ENCODE measurements at regions of chr20 and their contacts with region 1.

Region 1: DNA sequence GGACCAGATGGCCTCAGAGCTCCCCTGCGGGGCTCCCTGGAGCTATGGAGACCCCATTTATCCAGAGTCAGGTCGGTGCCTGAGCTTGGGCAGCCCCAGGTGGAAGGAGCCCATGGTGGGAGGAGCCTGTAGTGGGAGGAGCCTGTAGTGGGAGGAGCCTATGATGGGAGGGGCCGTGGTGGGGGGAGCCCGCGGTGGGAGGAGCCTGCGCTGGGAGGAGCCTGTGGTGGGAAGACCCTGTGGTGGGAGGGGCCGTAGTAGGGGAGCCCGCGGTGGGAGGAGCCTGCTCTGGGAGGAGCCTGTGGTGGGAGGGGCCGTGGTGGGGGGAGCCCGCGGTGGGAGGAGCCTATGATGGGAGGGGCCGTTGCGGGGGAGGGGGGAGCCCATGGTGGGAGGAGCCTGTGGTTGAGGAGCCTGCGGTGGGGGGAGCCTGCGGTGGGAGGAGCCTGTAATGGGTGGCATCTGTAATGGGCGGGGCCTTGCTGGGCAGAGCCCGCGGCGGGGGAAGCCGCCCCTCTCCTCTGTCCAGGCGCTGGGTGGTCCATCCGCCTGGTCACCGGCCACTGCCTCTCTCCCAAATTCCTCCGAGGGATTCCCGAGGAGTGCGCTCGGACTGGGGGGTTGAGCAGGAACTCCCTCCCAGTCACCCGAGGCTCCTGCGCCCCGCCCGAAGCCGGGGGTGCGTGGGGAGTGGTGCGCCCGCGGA is 579 bp upstream of the FNDC11 start:
- DNase-seq: peak; percentile 96
- ATAC-seq: peak; percentile 75
- H3K4me3 ChIP-seq: peak overlapping the region; percentile 7 to 89 (median 75)
- H3K4me3 Mint-ChIP-seq: peak overlapping the region; percentile 86
- H3K27ac ChIP-seq: peak overlapping the region; percentile 79 to 88
- H3K27ac Mint-ChIP-seq: peak overlapping the region; percentile 89
- H3K4me1 ChIP-seq: peaks cover 36 to 50% of the 10 kb centered on the region in 2 donors
- H3K4me1 Mint-ChIP-seq: peaks cover 50% of the 10 kb centered on the region
- H3K27me3 ChIP-seq: peaks cover 0 to 5% (median under 1%) of the 10 kb centered on the region in 4 experiments
- H3K27me3 Mint-ChIP-seq: no peaks in the 10 kb centered on the region
- CTCF ChIP-seq: no peak

Region 2: DNA sequence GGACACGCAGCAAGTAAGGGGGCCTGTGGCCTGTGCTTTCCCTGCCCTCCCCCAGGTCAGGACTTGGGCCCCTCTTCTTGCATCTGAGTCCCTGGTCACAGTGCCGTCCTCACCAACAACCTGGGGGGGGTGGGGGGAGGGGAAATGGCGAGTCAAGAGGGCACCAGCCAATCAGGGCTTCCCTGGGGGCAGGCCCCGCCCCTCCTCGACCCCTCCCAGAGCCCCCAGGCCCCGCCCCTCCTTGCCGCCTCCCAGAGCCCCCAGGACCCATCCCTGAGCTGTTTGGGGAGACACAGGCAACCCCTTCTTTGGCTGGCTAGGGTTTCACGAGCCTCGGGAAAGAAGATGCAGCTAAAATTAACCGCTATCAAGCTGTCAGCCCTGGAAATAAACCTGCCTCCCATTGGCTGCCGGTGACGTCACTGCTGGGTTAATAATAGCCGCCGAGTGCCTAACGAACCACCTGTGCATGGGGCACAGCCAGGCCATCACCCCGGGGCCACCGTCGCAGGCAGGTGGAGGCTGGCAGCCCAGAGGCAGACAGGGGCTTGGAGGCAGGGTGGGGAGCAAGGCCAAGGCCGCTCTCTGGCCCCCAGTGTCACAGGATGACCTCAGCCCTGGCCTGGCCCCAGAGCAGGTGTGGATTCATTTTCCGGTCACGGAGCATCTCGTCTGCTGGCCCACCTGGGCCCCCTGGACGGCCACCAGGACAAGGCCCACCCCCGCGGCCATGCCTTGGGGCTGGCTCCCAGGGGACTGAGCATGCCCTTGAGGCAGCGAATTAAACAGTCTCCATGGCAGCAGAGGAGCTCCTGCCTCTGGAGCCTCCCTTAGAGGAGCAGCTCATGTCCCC is 51.3 kb before region 1 on chr20:
- CTCF ChIA-PET with region 1: no interaction called
- POLR2A ChIA-PET with region 1: no interaction called
- intact Hi-C with region 1: no loop called
- DNase-seq: no peak
- ATAC-seq: no peak
- H3K4me3 ChIP-seq: no peak overlapping the region
- H3K4me3 Mint-ChIP-seq: no peak overlapping the region
- H3K27ac ChIP-seq: no peak overlapping the region
- H3K27ac Mint-ChIP-seq: no peak overlapping the region
- H3K4me1 ChIP-seq: peaks cover 14 to 16% of the 10 kb centered on the region in 2 donors
- H3K4me1 Mint-ChIP-seq: peaks cover 2% of the 10 kb centered on the region
- H3K27me3 ChIP-seq: peaks cover 0 to 33% (median 11%) of the 10 kb centered on the region in 4 experiments
- H3K27me3 Mint-ChIP-seq: peaks cover 20% of the 10 kb centered on the region
- CTCF ChIP-seq: no peak

Region 3: GRCh38 chr20:63542696-63543517 is 10.5 kb before region 1 on chr20:
- CTCF ChIA-PET with region 1: interaction called, 16 read pairs
- POLR2A ChIA-PET with region 1: interaction called, 11 read pairs
- intact Hi-C with region 1: loop called (anchors 1 kb)
- DNase-seq: peak; percentile 80
- ATAC-seq: peak; percentile 40
- H3K4me3 ChIP-seq: peak overlapping the region in 2 of 5 experiments; percentile 13 to 39
- H3K4me3 Mint-ChIP-seq: peak overlapping the region; percentile 74
- H3K27ac ChIP-seq: peak overlapping the region; percentile 67 to 78
- H3K27ac Mint-ChIP-seq: peak overlapping the region; percentile 89
- H3K4me1 ChIP-seq: peaks cover 44 to 75% of the 10 kb centered on the region in 2 donors
- H3K4me1 Mint-ChIP-seq: peaks cover 58% of the 10 kb centered on the region
- H3K27me3 ChIP-seq: peaks cover 0 to 2% (median 0%) of the 10 kb centered on the region in 4 experiments
- H3K27me3 Mint-ChIP-seq: no peaks in the 10 kb centered on the region
- CTCF ChIP-seq: no peak

Region 4: DNA sequence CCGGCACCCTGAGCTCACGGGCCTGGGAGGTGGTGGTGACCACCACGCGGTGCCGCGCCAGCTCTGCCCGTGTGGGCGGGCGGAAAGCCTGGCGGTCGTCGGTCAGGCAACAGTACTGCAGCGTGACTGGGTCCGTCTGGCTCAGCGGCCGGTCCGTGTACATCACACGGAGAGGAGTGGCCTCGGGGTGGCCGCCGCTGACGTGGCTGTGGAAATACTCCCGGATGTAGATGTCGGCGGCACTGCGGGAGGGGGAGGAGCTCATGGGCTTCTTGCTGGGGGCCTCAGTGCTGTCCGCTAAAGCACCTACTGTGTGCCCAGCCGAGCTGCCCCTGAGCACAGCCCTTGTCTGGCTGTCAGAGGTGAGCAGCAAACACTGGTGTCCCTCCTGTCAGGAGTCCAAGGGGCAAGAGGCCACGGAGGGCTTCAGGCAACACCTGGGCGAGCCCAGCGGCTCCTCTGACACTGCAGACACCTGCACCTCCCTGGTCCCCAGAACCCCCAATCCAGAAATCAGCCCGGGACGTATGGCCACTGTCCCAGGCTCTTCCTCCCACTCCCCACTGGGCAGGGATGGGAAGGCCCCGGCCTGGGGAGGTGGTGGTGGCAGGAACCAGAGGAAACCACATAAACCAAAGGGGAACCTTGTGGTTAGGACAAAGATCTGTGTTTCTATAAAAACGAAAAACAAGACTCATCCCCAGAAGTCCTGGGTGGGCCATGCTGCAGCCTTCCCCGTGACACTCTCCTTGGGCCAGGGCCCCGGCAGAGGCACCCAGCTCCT is 14.2 kb after region 1 on chr20:
- CTCF ChIA-PET with region 1: interaction called, 7 read pairs
- POLR2A ChIA-PET with region 1: interaction called, 16 read pairs
- intact Hi-C with region 1: loop called (anchors 1 kb)
- DNase-seq: peak; percentile 82
- ATAC-seq: peak; percentile 73
- H3K4me3 ChIP-seq: peak overlapping the region in 4 of 5 experiments; percentile 44 to 64 (median 49)
- H3K4me3 Mint-ChIP-seq: peak overlapping the region; percentile 88
- H3K27ac ChIP-seq: peak overlapping the region; percentile 46 to 65
- H3K27ac Mint-ChIP-seq: peak overlapping the region; percentile 83
- H3K4me1 ChIP-seq: peaks cover 34 to 48% of the 10 kb centered on the region in 2 donors
- H3K4me1 Mint-ChIP-seq: peaks cover 29% of the 10 kb centered on the region
- H3K27me3 ChIP-seq: no peaks in the 10 kb centered on the region
- H3K27me3 Mint-ChIP-seq: no peaks in the 10 kb centered on the region
- CTCF ChIP-seq: no peak

Region 5: DNA sequence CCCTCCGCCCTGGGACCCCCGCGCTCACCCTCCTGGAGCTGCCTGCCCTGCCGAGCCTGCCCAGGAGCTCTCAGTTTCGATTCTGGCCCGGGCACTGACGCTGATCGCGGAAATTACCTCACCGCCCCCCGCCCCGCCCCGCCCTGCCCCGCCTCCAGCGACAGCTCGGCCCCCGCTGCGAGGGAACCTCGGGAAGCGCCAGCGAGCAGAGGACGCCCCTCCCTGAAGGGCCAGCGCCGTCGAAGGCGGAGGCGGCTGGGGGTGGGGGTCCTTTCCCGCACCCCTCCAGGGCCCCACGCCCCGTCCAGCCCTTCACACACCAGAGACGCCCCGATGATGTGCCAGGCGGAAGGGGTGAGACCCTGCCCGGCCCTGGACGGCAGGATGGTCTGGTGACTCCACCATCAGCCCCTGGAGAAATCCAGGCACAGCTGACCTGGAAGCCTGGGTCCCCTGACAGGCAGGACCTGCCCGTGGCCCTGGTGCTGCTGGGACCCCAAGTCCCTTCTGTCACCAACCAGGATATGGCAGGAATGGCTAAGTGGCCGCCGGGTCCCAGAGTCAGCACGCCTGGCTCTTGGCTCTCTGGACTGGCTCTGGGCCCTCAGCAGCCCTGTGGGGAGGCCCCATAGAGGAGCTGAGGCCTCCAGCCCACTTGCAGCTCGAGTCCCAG is 20.9 kb after region 1 on chr20 and contains the start of gene HELZ2:
- CTCF ChIA-PET with region 1: interaction called, 3 read pairs
- POLR2A ChIA-PET with region 1: interaction called, 8 read pairs
- intact Hi-C with region 1: loop called (anchors 1 kb)
- DNase-seq: peak; percentile 82
- ATAC-seq: peak; percentile 93
- H3K4me3 ChIP-seq: peak within 1 kb of the TSS; percentile 61 to 86 (median 79)
- H3K4me3 Mint-ChIP-seq: peak within 1 kb of the TSS; percentile 87
- H3K27ac ChIP-seq: peak within 1 kb of the TSS; percentile 71 to 86
- H3K27ac Mint-ChIP-seq: peak within 1 kb of the TSS; percentile 83
- H3K4me1 ChIP-seq: peaks cover 21 to 38% of the 10 kb centered on the region in 2 donors
- H3K4me1 Mint-ChIP-seq: peaks cover 9% of the 10 kb centered on the region
- H3K27me3 ChIP-seq: no peaks in the 10 kb centered on the region
- H3K27me3 Mint-ChIP-seq: no peaks in the 10 kb centered on the region
- CTCF ChIP-seq: no peak
- total RNA-seq, gene HELZ2: 52.6 and 53.7 TPM in 2 replicates

Region 6: GRCh38 chr20:63635431-63636141 is 82.2 kb after region 1 on chr20:
- CTCF ChIA-PET with region 1: interaction called, 7 read pairs
- POLR2A ChIA-PET with region 1: interaction called, 3 read pairs
- intact Hi-C with region 1: loop called (anchors 2 kb)
- DNase-seq: peak; percentile 84
- ATAC-seq: peak; percentile 69
- H3K4me3 ChIP-seq: peak overlapping the region; percentile 12 to 45 (median 23)
- H3K4me3 Mint-ChIP-seq: peak overlapping the region; percentile 78
- H3K27ac ChIP-seq: peak overlapping the region; percentile 75 to 92
- H3K27ac Mint-ChIP-seq: peak overlapping the region; percentile 99
- H3K4me1 ChIP-seq: peaks cover 75 to 95% of the 10 kb centered on the region in 2 donors
- H3K4me1 Mint-ChIP-seq: peaks cover 70% of the 10 kb centered on the region
- H3K27me3 ChIP-seq: no peaks in the 10 kb centered on the region
- H3K27me3 Mint-ChIP-seq: no peaks in the 10 kb centered on the region
- CTCF ChIP-seq: no peak

Region 7: GRCh38 chr20:63641792-63642544 is 88.6 kb after region 1 on chr20:
- CTCF ChIA-PET with region 1: interaction called, 7 read pairs
- POLR2A ChIA-PET with region 1: interaction called, 9 read pairs
- intact Hi-C with region 1: loop called (anchors 1 kb)
- DNase-seq: peak; percentile 96
- ATAC-seq: peak; percentile 72
- H3K4me3 ChIP-seq: peak overlapping the region in 4 of 5 experiments; percentile 84 to 97 (median 90)
- H3K4me3 Mint-ChIP-seq: peak overlapping the region; percentile 82
- H3K27ac ChIP-seq: peak overlapping the region; percentile 91
- H3K27ac Mint-ChIP-seq: peak overlapping the region; percentile 97
- H3K4me1 ChIP-seq: peaks cover 23 to 41% of the 10 kb centered on the region in 2 donors
- H3K4me1 Mint-ChIP-seq: peaks cover 28% of the 10 kb centered on the region
- H3K27me3 ChIP-seq: no peaks in the 10 kb centered on the region
- H3K27me3 Mint-ChIP-seq: peaks cover 4% of the 10 kb centered on the region
- CTCF ChIP-seq: peak; percentile 67

Region 8: DNA sequence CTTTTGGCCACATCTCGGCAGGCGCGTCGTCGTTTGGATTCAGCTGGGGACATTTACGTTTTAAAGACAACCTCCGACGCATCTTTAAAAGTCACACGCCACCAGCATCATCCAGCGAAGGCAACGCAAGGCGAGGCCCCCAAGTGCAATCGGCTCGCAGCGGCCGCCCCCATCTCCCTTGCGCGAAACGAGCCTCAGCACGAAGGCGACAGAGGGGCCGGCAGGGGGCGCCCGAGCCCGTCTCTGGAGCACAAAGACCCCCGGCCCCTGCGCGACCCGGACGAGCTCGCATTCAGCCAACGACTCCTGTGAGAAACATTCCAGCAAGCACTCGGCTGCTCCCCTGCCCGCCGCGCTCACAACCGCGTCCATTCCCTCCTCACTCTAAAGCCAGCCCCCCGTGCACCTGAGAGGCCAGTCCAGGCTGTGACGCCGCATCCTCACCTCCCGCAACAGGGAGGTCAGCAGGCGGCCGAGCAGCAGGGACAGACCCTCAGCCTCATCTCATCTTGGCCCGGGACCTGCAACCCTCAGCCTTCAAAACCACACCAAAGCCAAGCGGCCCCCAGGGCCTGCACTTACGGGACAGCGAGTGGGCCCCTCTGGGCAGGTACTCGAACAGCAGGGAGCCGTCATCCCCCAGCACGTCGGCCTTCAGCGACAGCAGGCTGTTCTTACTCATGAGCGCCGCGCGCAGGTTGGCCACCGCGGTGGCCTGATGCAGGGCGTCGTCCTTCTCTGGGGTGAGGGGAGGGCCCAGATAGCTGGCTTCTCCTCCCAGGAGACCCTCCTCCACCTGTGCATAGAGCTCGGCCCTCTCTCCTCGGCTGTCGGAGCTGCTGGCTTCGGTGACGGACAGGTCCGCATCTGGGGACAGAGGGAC is 222.0 kb after region 1 on chr20:
- CTCF ChIA-PET with region 1: no interaction called
- POLR2A ChIA-PET with region 1: no interaction called
- intact Hi-C with region 1: no loop called
- DNase-seq: peak; percentile 33
- ATAC-seq: no peak
- H3K4me3 ChIP-seq: no peak overlapping the region
- H3K4me3 Mint-ChIP-seq: no peak overlapping the region
- H3K27ac ChIP-seq: no peak overlapping the region
- H3K27ac Mint-ChIP-seq: no peak overlapping the region
- H3K4me1 ChIP-seq: no peaks in the 10 kb centered on the region
- H3K4me1 Mint-ChIP-seq: no peaks in the 10 kb centered on the region
- H3K27me3 ChIP-seq: no peaks in the 10 kb centered on the region
- H3K27me3 Mint-ChIP-seq: no peaks in the 10 kb centered on the region
- CTCF ChIP-seq: no peak